Activated T-helper 2 cell treated with anti-CD3 and anti-CD28 coated beads, Interferon-gamma antibody, Interleukin-2, Interleukin-4, amounts not matched to agents 10 μg/mL and 5 μg/mL and 100 μg/mL, durations not matched to agents 14 hours and 24 hours and 36 hours (primary cell): ENCODE measurements at regions of chr11 and their contacts with region 1.

Region 1: GRCh38 chr11:44565211-44565952 is at the start of gene CD82:
- DNase-seq: peak; percentile 98
- H3K4me3 Mint-ChIP-seq: peak within 1 kb of the TSS; percentile 86
- H3K27ac Mint-ChIP-seq: peak within 1 kb of the TSS; percentile 71
- H3K4me1 Mint-ChIP-seq: peaks cover 52% of the 10 kb centered on the region
- H3K27me3 Mint-ChIP-seq: no peaks in the 10 kb centered on the region
- total RNA-seq, gene CD82: 397 and 425 TPM in 2 replicates

Region 2: DNA sequence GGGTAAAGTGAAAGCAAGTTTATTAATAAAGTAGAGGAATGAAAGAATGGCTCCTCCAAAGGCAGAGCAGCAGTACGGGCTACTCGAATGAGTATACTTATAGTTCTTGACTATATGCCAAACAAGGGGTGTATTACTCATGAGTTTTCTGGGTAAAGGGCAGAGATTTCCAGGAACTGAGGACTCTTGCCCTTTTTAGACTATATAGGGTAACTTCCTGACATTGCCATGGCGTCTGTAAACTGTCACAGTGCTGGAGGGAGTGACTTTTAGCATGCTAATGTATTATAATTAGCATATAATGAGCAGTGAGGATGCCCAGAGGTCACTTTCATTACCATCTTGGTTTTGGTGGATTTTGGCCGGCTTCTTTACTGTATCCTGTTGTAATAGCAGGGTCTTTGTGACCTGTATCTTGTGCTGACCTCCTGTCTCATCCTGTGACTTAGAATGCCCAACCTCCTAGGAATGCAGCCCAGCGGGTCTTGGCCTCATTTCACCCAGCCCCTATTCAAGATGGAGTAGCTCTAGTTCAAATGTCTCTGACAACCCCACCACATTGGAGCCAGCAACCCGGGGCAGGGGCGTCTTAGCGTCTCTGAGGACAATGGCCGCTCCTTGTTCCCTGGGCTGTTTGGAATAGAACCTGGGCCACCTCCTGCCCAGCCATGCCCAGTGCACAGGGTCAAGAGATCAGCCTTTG is 34.8 kb before region 1 on chr11:
- intact Hi-C with region 1: loop called (anchors 1 kb)
- DNase-seq: peak; percentile 46
- H3K4me3 Mint-ChIP-seq: peak overlapping the region; percentile 63
- H3K27ac Mint-ChIP-seq: peak overlapping the region; percentile 97
- H3K4me1 Mint-ChIP-seq: peaks cover 33% of the 10 kb centered on the region
- H3K27me3 Mint-ChIP-seq: no peaks in the 10 kb centered on the region

Region 3: GRCh38 chr11:44596525-44597276 is 31.3 kb after region 1 on chr11:
- intact Hi-C with region 1: no loop called
- DNase-seq: peak; percentile 78
- H3K4me3 Mint-ChIP-seq: peak overlapping the region; percentile 71
- H3K27ac Mint-ChIP-seq: peak overlapping the region; percentile 97
- H3K4me1 Mint-ChIP-seq: peaks cover 62% of the 10 kb centered on the region
- H3K27me3 Mint-ChIP-seq: no peaks in the 10 kb centered on the region

Region 4: GRCh38 chr11:44609001-44609782 is 43.8 kb after region 1 on chr11:
- intact Hi-C with region 1: loop called (anchors 5 kb)
- DNase-seq: no peak
- H3K4me3 Mint-ChIP-seq: no peak overlapping the region
- H3K27ac Mint-ChIP-seq: peak overlapping the region; percentile 78
- H3K4me1 Mint-ChIP-seq: peaks cover 61% of the 10 kb centered on the region
- H3K27me3 Mint-ChIP-seq: no peaks in the 10 kb centered on the region

Region 5: GRCh38 chr11:44727373-44728287 is 162.2 kb after region 1 on chr11:
- intact Hi-C with region 1: loop called (anchors 5 kb)
- DNase-seq: peak; percentile 63
- H3K4me3 Mint-ChIP-seq: peak overlapping the region; percentile 77
- H3K27ac Mint-ChIP-seq: no peak overlapping the region
- H3K4me1 Mint-ChIP-seq: peaks cover 30% of the 10 kb centered on the region
- H3K27me3 Mint-ChIP-seq: peaks cover 47% of the 10 kb centered on the region

Region 6: DNA sequence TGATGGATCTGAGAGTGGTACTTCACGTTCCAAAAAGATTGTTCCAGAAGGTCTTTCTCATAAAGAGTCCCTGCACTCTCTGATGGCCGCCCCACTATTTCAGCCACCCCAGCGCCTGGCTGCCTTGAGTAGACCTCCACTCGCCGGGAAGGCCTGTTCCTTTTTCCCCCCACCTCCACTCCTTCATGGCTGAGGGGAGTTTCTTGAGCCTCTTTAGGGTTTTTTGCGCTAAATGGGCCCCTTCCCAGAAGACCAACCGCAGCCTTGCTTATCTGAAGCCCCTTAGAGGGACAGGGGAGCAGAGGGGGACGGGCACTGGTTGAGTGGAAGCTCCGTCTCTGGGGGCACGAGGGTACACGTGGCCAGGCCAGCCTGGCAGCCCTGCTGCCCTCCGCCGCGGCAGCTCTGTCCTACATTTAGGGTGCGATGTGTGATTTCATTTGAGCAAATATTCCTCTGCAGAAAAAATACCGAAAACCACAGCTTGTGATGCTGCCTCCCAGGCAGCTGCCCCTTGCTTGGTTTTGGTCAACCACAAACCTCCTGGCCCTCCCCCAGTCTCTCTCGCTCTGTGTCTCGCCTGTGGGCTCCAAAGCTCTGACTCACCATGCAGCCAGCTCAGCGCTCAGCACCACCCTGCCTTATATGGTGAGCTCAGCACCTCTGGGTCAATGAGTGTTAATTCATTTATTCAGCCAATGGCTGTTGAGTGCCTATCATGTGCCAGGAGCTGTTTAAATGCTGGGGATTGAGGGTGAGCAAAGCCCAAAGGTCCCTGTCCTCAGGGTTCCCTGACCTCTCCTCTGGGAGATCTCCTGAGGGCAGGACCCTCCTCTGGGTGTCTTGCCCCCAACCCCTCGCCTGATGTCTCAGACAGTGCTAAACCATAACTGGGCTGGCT is 296.7 kb after region 1 on chr11:
- intact Hi-C with region 1: loop called (anchors 5 kb)
- DNase-seq: peak; percentile 76
- H3K4me3 Mint-ChIP-seq: no peak overlapping the region
- H3K27ac Mint-ChIP-seq: peak overlapping the region; percentile 14
- H3K4me1 Mint-ChIP-seq: peaks cover 19% of the 10 kb centered on the region
- H3K27me3 Mint-ChIP-seq: peaks cover 64% of the 10 kb centered on the region

Region 7: DNA sequence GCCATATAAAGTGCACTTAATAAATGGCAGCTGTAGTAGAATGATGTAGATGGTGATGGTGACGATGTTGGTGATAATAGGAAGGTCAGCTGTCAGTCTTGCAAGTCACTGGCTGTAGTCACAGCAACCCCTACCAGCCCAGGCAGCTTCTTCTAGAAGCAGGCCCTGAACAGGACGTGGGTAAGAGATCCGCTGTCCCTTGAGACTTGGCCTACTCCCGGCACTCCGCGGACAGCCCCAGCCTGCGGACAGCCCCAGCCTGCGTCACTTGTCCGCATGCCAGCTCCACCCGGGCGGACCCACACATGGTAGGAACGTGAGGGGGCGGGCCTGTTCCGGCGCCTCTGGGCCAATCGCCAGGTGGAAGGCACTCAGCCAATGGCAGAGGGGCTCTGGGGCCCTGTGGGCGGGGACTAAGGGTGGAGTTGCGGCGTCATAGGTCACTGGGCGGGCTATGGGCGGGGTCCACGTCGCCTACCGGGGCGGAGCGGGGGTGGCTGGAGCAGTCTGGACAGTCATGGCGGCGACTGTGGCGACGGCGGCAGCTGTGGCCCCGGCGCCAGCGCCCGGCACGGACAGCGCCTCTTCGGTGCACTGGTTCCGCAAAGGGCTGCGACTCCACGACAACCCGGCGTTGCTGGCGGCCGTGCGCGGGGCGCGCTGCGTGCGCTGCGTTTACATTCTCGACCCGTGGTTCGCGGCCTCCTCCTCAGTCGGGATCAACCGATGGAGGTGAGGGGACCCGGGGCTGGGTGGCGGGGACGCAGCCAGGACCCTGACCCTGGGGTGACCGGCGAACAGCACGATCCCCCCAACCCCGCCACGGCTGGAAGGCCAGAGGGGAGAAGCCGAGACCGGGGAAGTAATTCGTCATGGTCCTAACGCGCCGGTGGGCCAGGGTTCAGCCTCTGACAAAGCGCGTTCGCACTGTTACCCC is 1281.9 kb after region 1 on chr11 and contains the start of gene CRY2:
- intact Hi-C with region 1: loop called (anchors 10 kb)
- DNase-seq: peak; percentile 96
- H3K4me3 Mint-ChIP-seq: peak within 1 kb of the TSS; percentile 84
- H3K27ac Mint-ChIP-seq: peak within 1 kb of the TSS; percentile 87
- H3K4me1 Mint-ChIP-seq: peaks cover 47% of the 10 kb centered on the region
- H3K27me3 Mint-ChIP-seq: peaks cover 12% of the 10 kb centered on the region
- total RNA-seq, gene CRY2: 21.5 and 24.0 TPM in 2 replicates

Region 8: GRCh38 chr11:45917623-45918330 is 1352.4 kb after region 1 on chr11 and contains the start of gene PEX16:
- intact Hi-C with region 1: loop called (anchors 5 kb)
- DNase-seq: peak; percentile 98
- H3K4me3 Mint-ChIP-seq: peak within 1 kb of the TSS; percentile 96
- H3K27ac Mint-ChIP-seq: peak within 1 kb of the TSS; percentile 98
- H3K4me1 Mint-ChIP-seq: peaks cover 22% of the 10 kb centered on the region
- H3K27me3 Mint-ChIP-seq: peaks cover 7% of the 10 kb centered on the region
- total RNA-seq, gene PEX16: 30.8 and 38.5 TPM in 2 replicates